Common myeloid progenitor, CD34-positive (primary cell): ENCODE measurements at regions of chr3 and their contacts with region 1.

Region 1: DNA sequence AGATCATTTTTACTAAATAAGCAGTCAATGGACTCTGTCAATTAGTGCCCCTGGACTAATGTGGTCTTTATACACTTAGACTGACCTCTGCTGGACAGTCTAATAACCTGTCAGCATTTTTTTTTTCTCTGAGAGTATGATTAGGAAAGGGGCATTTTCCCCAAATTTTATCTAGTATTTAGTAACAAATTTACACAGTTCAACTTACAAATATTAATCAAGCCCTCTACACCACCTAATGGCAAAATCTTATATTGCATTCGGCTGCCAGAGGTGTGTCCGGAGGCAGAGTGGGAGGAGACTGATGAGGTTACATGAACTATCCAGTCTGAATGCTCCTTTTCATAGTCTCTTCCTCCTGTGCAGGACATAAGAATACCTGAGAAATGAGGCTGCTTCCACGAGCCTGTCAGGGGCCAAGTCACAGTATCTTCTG is 36.0 kb upstream of the COLQ start:
- DNase-seq: peak; percentile 82 to 91 (median 88)
- H3K4me3 ChIP-seq: no peak overlapping the region
- H3K27ac ChIP-seq: no peak overlapping the region
- H3K4me1 ChIP-seq: peaks cover 10 to 18% (median 14%) of the 10 kb centered on the region in 4 experiments
- H3K27me3 ChIP-seq: no peaks in the 10 kb centered on the region

Region 2: DNA sequence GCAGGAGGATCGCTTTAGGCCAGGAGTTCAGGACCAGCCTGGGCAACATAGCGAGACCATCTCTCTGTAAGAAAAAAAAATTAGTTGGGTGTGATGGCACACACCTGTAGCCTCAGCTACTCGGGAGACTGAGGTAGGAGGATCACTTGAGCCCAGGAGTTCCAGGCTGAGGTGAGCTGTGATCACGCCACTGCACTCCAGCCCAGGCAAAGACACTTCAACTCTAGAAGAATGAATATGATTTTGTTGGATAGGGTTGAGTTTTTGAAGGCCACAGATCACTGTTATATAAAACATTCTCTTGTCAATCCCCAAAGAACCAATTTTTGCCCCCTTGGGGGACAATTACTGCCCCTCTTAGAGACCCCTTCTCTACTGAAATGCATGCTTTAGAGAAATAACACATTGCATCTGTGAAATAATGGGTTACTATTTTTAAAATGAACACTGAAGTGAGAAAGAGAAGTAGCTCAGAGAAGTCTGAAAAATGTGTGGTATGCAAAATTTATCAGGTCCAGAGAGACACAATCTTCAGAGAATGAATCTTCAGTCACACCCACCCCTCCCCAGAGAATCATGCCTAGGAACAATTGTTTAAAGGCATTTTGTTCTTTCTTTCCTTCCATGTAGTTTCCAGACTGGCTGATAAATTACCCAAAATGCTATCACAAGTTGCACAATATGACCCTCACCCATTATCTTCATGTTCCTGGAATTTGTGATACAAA is 172.9 kb before region 1 on chr3:
- CTCF ChIA-PET with region 1: no interaction called
- POLR2A ChIA-PET with region 1: no interaction called
- DNase-seq: no peak
- H3K4me3 ChIP-seq: no peak overlapping the region
- H3K27ac ChIP-seq: no peak overlapping the region
- H3K4me1 ChIP-seq: peaks cover 0 to 6% (median 0%) of the 10 kb centered on the region in 4 experiments
- H3K27me3 ChIP-seq: no peaks in the 10 kb centered on the region

Region 3: DNA sequence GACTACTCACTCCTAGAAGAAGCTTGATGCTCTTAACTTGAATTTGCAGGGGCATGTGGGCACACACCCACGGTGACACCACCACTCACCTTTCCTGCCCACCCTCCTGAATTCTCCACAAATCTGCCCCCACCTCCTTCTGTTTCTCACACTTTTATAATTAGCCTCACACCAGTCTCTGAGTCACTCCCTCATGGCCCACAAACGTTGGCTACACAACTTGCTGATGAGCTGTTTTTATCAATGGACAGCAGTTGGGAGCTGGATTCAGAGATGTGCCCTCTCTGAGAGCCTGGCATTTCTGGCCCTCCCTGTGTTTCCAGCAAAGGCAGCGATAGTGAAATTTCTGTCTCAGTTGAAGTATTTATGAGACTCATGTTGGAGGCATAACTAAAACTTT is 37.3 kb before region 1 on chr3:
- CTCF ChIA-PET with region 1: interaction called, 10 read pairs
- POLR2A ChIA-PET with region 1: interaction called, 3 read pairs
- DNase-seq: peak in 2 of 3 donors; percentile 43 to 65
- H3K4me3 ChIP-seq: peak overlapping the region in 1 of 7 experiments; percentile 33
- H3K27ac ChIP-seq: no peak overlapping the region
- H3K4me1 ChIP-seq: peaks cover 9 to 44% (median 28%) of the 10 kb centered on the region in 4 experiments
- H3K27me3 ChIP-seq: no peaks in the 10 kb centered on the region

Region 4: DNA sequence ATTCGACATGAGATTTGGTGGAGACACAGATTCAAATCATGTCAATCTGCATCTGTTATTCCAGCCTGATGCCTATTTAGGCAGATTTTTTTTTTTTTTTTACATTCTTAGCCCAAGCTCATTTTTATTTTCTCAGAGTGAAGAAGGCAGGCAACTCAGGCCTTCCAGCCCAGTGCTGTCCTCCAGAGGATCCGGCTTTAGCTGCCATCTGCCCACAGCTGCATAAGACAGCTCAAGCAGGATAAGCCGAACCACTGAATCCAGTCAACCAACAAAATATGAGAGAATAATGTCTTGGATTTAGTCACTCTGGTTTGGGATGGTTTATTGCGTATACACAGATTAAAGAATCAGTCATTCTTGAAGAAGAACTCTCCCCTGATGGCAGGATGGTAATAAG is 16.2 kb before region 1 on chr3:
- CTCF ChIA-PET with region 1: interaction called, 10 read pairs
- POLR2A ChIA-PET with region 1: no interaction called
- DNase-seq: no peak
- H3K4me3 ChIP-seq: no peak overlapping the region
- H3K27ac ChIP-seq: no peak overlapping the region
- H3K4me1 ChIP-seq: peaks cover 4 to 43% (median 24%) of the 10 kb centered on the region in 4 experiments
- H3K27me3 ChIP-seq: no peaks in the 10 kb centered on the region

Region 5: GRCh38 chr3:16239086-16239770 is 681.7 kb after region 1 on chr3:
- CTCF ChIA-PET with region 1: no interaction called
- POLR2A ChIA-PET with region 1: no interaction called
- DNase-seq: no peak
- H3K4me3 ChIP-seq: no peak overlapping the region
- H3K27ac ChIP-seq: no peak overlapping the region
- H3K4me1 ChIP-seq: peaks cover 0 to 2% (median 0%) of the 10 kb centered on the region in 4 experiments
- H3K27me3 ChIP-seq: no peaks in the 10 kb centered on the region